Activated CD4-positive, alpha-beta T cell treated with anti-CD3 and anti-CD28 coated beads, Interleukin-2, amount 10 ng/mL, durations not matched to agents 24 days and 14 days (primary cell): ENCODE measurements at regions of chr2 and their contacts with region 1.

Region 1: GRCh38 chr2:173354601-173355131 is at the start of gene CDCA7:
- DNase-seq: peak; percentile 94
- H3K4me3 Mint-ChIP-seq: peak within 1 kb of the TSS; percentile 92
- H3K27ac Mint-ChIP-seq: peak within 1 kb of the TSS; percentile 92
- H3K4me1 Mint-ChIP-seq: peaks cover 39% of the 10 kb centered on the region
- H3K27me3 Mint-ChIP-seq: peaks cover 11% of the 10 kb centered on the region
- total RNA-seq, gene CDCA7: 116 and 118 TPM in 2 replicates

Region 2: GRCh38 chr2:173075781-173076580 is 278.7 kb before region 1 on chr2 and contains the start of gene MAP3K20:
- intact Hi-C with region 1: loop called (anchors 2 kb)
- DNase-seq: peak; percentile 90
- H3K4me3 Mint-ChIP-seq: peak within 1 kb of the TSS; percentile 83
- H3K27ac Mint-ChIP-seq: peak within 1 kb of the TSS; percentile 79
- H3K4me1 Mint-ChIP-seq: peaks cover 22% of the 10 kb centered on the region
- H3K27me3 Mint-ChIP-seq: peaks cover 30% of the 10 kb centered on the region
- total RNA-seq, gene MAP3K20: 17.9 and 19.1 TPM in 2 replicates

Region 3: GRCh38 chr2:173239644-173240043 is 115.0 kb before region 1 on chr2:
- intact Hi-C with region 1: loop called (anchors 10 kb)
- DNase-seq: peak; percentile 65
- H3K4me3 Mint-ChIP-seq: no peak overlapping the region
- H3K27ac Mint-ChIP-seq: no peak overlapping the region
- H3K4me1 Mint-ChIP-seq: peaks cover 2% of the 10 kb centered on the region
- H3K27me3 Mint-ChIP-seq: no peaks in the 10 kb centered on the region

Region 4: GRCh38 chr2:173370198-173370597 is 15.5 kb after region 1 on chr2:
- intact Hi-C with region 1: loop called (anchors 1 kb)
- DNase-seq: peak; percentile 74
- H3K4me3 Mint-ChIP-seq: peak overlapping the region; percentile 46
- H3K27ac Mint-ChIP-seq: peak overlapping the region; percentile 83
- H3K4me1 Mint-ChIP-seq: peaks cover 28% of the 10 kb centered on the region
- H3K27me3 Mint-ChIP-seq: no peaks in the 10 kb centered on the region

Region 5: GRCh38 chr2:174248187-174248997 is 893.7 kb after region 1 on chr2 and contains the start of gene OLA1:
- intact Hi-C with region 1: loop called (anchors 10 kb)
- DNase-seq: peak; percentile 99
- H3K4me3 Mint-ChIP-seq: peak within 1 kb of the TSS; percentile 88
- H3K27ac Mint-ChIP-seq: peak within 1 kb of the TSS; percentile 90
- H3K4me1 Mint-ChIP-seq: peaks cover 25% of the 10 kb centered on the region
- H3K27me3 Mint-ChIP-seq: peaks cover 2% of the 10 kb centered on the region
- total RNA-seq, gene OLA1: 164 and 167 TPM in 2 replicates